Left ventricle myocardium inferior (tissue), 1 donor: ENCODE measurements at regions of chrX and their contacts with region 1.

Region 1: GRCh38 chrX:107731831-107732502 is 43.6 kb downstream of the TSC22D3 start:
- DNase-seq: peak; percentile 87
- H3K4me3 ChIP-seq: peak overlapping the region; percentile 6
- H3K27ac ChIP-seq: peak overlapping the region; percentile 80
- H3K4me1 ChIP-seq: peaks cover 91% of the 10 kb centered on the region
- H3K27me3 ChIP-seq: no peaks in the 10 kb centered on the region
- CTCF ChIP-seq: no peak

Region 2: DNA sequence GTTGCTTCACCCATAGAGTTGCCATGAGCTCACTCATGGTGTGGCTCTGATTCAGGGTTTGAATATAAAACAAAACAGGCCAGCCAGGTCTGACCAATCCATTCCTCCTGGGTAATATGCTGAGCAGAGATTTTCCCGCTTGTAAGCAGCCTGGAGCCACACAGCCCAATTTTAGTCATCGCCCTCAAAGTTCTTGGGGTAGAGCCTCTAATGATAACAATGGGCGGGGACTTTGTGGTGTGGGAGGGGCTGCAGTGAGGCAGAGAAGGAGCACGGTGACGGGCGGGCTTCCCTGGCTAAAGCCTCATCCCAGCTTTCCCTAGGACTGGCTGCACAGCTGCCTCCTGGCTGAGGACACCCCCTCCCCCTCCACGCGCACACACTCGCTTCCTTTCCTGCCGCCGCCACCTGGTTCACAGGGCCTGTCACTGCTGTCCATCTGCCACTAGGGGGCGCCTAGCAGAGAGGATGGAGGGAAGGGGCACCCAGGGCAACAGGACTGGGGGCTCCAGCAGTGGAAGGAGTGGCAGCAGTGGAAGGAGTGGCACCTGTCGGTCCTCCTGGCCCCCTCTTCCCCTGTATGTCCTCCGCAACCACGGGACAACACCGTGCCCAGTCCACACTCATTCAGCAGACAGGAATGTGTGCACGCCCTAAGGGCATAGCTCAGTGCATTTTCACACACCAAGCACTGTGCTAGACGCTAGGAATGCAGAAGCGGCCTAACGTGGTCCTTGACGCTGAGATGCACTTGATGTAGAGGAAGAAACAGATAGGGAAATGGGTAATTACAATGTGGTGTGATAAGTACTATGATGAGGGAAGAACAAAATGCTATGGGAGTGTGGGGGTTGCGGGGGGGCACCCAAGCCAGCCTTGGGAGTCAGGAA is 76.8 kb before region 1 on chrX:
- intact Hi-C with region 1: no loop called
- DNase-seq: peak; percentile 49
- H3K4me3 ChIP-seq: no peak overlapping the region
- H3K27ac ChIP-seq: peak overlapping the region; percentile 42
- H3K4me1 ChIP-seq: peaks cover 12% of the 10 kb centered on the region
- H3K27me3 ChIP-seq: no peaks in the 10 kb centered on the region
- CTCF ChIP-seq: peak; percentile 74

Region 3: GRCh38 chrX:107766470-107767150 is 34.6 kb after region 1 on chrX:
- intact Hi-C with region 1: loop called (anchors 5 kb)
- DNase-seq: peak; percentile 53
- H3K4me3 ChIP-seq: no peak overlapping the region
- H3K27ac ChIP-seq: peak overlapping the region; percentile 55
- H3K4me1 ChIP-seq: peaks cover 28% of the 10 kb centered on the region
- H3K27me3 ChIP-seq: no peaks in the 10 kb centered on the region
- CTCF ChIP-seq: no peak

Region 4: GRCh38 chrX:107776649-107777535 is 44.9 kb after region 1 on chrX:
- intact Hi-C with region 1: loop called (anchors 5 kb)
- DNase-seq: peak; percentile 67
- H3K4me3 ChIP-seq: peak overlapping the region; percentile 73
- H3K27ac ChIP-seq: peak overlapping the region; percentile 87
- H3K4me1 ChIP-seq: peaks cover 20% of the 10 kb centered on the region
- H3K27me3 ChIP-seq: no peaks in the 10 kb centered on the region
- CTCF ChIP-seq: peak; percentile 73

Region 5: GRCh38 chrX:107894038-107894437 is 162.1 kb after region 1 on chrX:
- intact Hi-C with region 1: no loop called
- DNase-seq: no peak
- H3K4me3 ChIP-seq: no peak overlapping the region
- H3K27ac ChIP-seq: no peak overlapping the region
- H3K4me1 ChIP-seq: no peaks in the 10 kb centered on the region
- H3K27me3 ChIP-seq: no peaks in the 10 kb centered on the region
- CTCF ChIP-seq: peak; percentile 58

Region 6: DNA sequence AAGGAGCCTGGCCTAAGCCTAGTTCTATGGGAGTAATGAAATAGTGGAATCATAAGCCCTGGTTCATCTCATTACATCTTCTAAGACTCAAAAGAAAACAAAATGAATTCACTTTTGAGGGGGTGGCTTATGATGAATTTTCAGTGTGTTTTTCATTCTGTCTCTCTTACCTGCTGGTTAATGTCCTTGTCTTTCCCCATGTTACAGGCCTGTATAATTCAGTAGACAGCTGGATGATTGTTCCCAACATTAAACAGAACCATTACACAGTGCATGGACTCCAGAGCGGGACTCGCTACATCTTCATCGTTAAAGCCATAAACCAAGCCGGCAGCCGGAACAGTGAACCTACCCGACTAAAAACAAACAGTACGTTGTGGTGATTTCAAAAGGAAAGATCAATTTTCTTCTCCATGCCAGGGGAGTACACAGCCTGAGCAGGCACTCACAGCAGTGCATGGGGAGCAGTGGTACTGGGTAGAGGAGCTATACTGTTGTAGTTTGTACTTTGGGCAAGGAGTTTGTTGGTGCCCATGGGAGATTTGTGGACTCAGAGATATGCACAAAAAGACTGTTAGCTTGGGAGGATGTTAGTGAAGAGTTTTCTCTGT is 192.3 kb after region 1 on chrX:
- intact Hi-C with region 1: no loop called
- DNase-seq: no peak
- H3K4me3 ChIP-seq: no peak overlapping the region
- H3K27ac ChIP-seq: no peak overlapping the region
- H3K4me1 ChIP-seq: no peaks in the 10 kb centered on the region
- H3K27me3 ChIP-seq: no peaks in the 10 kb centered on the region
- CTCF ChIP-seq: no peak